ENCODE measurements at regions of chr16 and their contacts with region 1.

Region 1: DNA sequence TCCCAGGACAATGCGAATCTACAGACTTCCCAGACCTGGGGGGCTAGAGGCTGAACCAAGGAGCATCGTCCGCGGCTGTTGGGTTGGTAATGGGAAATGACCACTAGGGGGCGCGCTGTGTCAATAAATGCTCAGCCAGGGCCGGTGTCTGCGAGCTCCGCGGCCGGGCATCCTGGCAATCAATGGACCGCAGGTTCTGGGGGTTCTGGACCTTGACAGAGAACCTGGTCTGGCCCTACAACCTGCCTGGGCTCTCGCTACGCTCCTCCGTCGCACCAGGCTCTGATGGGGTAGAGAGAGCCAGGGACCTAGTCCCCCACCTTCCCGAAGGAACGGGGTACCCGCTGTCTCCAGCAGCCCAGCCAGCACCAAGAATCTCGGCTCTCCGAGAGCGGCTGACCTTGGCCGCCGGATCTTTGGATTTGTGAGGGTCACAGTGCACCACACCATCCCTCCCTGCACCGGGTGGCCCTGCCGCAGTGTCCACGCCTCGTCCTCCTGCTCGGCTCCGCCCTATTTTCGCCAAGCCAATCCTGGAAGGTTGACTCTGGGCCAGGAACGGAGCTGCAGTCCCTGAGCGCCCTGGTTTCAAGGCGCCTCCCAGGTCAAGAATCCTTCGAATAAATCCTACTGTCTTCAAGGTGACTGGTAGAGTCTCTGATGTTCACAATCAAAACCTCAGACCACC is 20.4 kb upstream of the BEAN1 start:
- DNase-seq: no peak
- H3K4me3 ChIP-seq: peak overlapping the region; percentile 68
- CTCF ChIP-seq: peak; percentile 81

Region 2: GRCh38 chr16:66391726-66392670 is 14.7 kb before region 1 on chr16:
- CTCF ChIA-PET with region 1: interaction called, 23 read pairs
- POLR2A ChIA-PET with region 1: no interaction called
- DNase-seq: no peak
- H3K4me3 ChIP-seq: no peak overlapping the region
- CTCF ChIP-seq: no peak

Region 3: GRCh38 chr16:66455970-66456369 is 49.3 kb after region 1 on chr16:
- CTCF ChIA-PET with region 1: interaction called, 13 read pairs
- POLR2A ChIA-PET with region 1: no interaction called
- DNase-seq: no peak
- H3K4me3 ChIP-seq: no peak overlapping the region
- CTCF ChIP-seq: no peak

Region 4: GRCh38 chr16:66569827-66570405 is 163.2 kb after region 1 on chr16:
- CTCF ChIA-PET with region 1: interaction called, 10 read pairs
- POLR2A ChIA-PET with region 1: no interaction called
- DNase-seq: peak; percentile 21
- H3K4me3 ChIP-seq: no peak overlapping the region
- CTCF ChIP-seq: no peak

Region 5: GRCh38 chr16:66650707-66651473 is 244.2 kb after region 1 on chr16:
- CTCF ChIA-PET with region 1: interaction called, 10 read pairs
- POLR2A ChIA-PET with region 1: no interaction called
- DNase-seq: peak; percentile 12
- H3K4me3 ChIP-seq: peak overlapping the region; percentile 0; the same call in 1 of the 2 replicates
- CTCF ChIP-seq: peak; percentile 90

Region 6: GRCh38 chr16:66872943-66873684 is 466.4 kb after region 1 on chr16:
- CTCF ChIA-PET with region 1: interaction called, 26 read pairs
- POLR2A ChIA-PET with region 1: no interaction called
- DNase-seq: peak; percentile 95
- H3K4me3 ChIP-seq: peak overlapping the region; percentile 51
- CTCF ChIP-seq: peak; percentile 99